Activated CD4-positive, alpha-beta T cell treated with anti-CD3 and anti-CD28 coated beads, Interleukin-2, amount 10 ng/mL, durations not matched to agents 7 days and 5 days (primary cell): ENCODE measurements at regions of chr9 and their contacts with region 1.

Region 1: DNA sequence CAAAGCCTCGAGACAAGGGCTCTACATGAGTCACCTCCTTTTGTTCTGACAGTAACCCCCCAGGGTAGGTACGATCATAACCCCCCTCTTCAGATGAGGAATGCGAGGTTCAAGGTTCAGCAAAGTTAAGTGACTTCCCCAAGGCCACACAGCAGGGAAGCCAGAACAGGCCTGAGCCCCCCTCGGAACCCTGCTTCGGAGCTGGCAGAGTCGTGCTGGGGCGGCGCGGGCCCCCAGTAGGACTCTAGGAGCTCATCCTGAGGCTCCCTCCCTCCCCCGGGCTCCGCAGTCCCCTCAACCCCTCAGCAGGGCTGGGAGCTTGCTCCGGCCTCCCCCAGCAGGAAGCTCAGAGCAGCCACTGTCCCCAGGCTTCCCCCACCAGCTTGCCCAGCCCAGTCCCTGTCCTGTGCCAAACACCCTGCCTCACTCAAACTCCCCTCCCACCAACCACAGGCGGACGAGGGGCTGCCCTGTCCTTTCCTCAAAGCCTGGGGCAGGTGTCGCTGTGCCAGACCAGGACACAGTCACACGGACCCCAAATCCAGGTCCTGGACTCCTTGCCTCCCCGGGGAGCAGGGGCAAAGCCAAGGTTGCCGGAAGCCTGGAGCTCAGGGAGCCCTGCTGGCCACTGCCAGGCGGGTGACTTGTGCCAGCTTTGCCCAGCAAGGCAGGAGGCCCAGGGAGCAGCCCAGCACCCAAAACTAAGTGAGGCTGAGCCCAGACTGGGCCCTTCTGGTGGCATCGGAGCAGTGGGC is 5.1 kb downstream of the AGPAT2 start:
- DNase-seq: no peak
- H3K4me3 Mint-ChIP-seq: no peak overlapping the region
- H3K27ac Mint-ChIP-seq: no peak overlapping the region
- H3K4me1 Mint-ChIP-seq: peaks cover 5% of the 10 kb centered on the region
- H3K27me3 Mint-ChIP-seq: no peaks in the 10 kb centered on the region

Region 2: GRCh38 chr9:136671646-136672430 is 10.3 kb before region 1 on chr9:
- CTCF ChIA-PET with region 1: interaction called, 11 read pairs
- POLR2A ChIA-PET with region 1: no interaction called
- DNase-seq: peak; percentile 31
- H3K4me3 Mint-ChIP-seq: no peak overlapping the region
- H3K27ac Mint-ChIP-seq: no peak overlapping the region
- H3K4me1 Mint-ChIP-seq: peaks cover 2% of the 10 kb centered on the region
- H3K27me3 Mint-ChIP-seq: no peaks in the 10 kb centered on the region